ENCODE measurements at regions of chr3 and their contacts with region 1.

Region 1: GRCh38 chr3:153768561-153769469 is 352.4 kb upstream of the ARHGEF26 start:
- DNase-seq: peak in 1 of 2 donors; percentile 25
- H3K4me3 ChIP-seq: no peak overlapping the region
- H3K27ac ChIP-seq: no peak overlapping the region
- H3K4me1 ChIP-seq: no peaks in the 10 kb centered on the region
- H3K27me3 ChIP-seq: no peaks in the 10 kb centered on the region
- CTCF ChIP-seq: peak in 2 of 3 donors; percentile 62 to 68
- POLR2A ChIP-seq: no peak

Region 2: GRCh38 chr3:153567556-153567955 is 201.3 kb before region 1 on chr3:
- intact Hi-C with region 1: loop called (anchors 5 kb)
- DNase-seq: no peak
- H3K4me3 ChIP-seq: no peak overlapping the region
- H3K27ac ChIP-seq: no peak overlapping the region
- H3K4me1 ChIP-seq: no peaks in the 10 kb centered on the region
- H3K27me3 ChIP-seq: no peaks in the 10 kb centered on the region
- CTCF ChIP-seq: no peak
- POLR2A ChIP-seq: no peak

Region 3: DNA sequence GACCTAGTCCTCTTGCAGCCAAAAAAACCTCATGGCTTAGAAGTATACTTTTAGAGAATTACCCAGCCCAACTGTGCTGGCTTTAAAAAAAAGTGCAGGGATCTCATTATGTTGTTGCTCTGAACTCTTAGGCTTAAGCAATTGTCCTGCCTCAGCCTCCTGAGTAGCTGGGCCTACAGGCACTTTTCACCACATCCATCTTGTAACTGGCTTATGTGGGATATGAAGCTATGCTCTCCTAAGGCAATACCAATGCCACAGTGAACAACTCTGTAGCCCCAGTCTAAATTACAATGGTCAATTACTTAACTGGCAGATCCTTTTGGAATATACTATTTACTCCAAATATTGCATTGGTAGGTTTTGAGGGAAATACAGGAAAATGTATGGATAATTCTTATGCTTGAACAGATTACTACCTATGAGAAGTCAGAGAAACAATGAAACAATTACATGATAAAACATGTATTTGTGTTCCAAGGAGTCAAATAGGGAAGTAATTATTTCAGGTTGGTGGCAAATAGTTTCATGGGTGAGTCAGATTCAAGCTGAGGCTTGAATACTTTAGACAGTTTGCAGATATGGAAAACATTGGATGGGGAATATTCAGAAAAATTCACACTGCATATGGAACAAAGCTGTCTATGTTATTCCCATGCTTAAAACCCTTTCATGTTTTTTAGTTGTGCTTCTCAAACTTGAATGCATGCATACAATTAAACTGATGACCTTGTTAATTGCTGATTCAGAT is 695.8 kb after region 1 on chr3:
- intact Hi-C with region 1: no loop called
- DNase-seq: no peak
- H3K4me3 ChIP-seq: no peak overlapping the region
- H3K27ac ChIP-seq: peak overlapping the region in 1 of 2 donors; percentile 38
- H3K4me1 ChIP-seq: no peaks in the 10 kb centered on the region
- H3K27me3 ChIP-seq: no peaks in the 10 kb centered on the region
- CTCF ChIP-seq: no peak
- POLR2A ChIP-seq: no peak

Region 4: GRCh38 chr3:154745960-154746359 is 977.1 kb after region 1 on chr3:
- intact Hi-C with region 1: no loop called
- DNase-seq: no peak
- H3K4me3 ChIP-seq: no peak overlapping the region
- H3K27ac ChIP-seq: no peak overlapping the region
- H3K4me1 ChIP-seq: no peaks in the 10 kb centered on the region
- H3K27me3 ChIP-seq: no peaks in the 10 kb centered on the region
- CTCF ChIP-seq: no peak
- POLR2A ChIP-seq: no peak